Prostate gland (tissue), 2 donors: ENCODE measurements at regions of chr1 and their contacts with region 1.

Region 1: DNA sequence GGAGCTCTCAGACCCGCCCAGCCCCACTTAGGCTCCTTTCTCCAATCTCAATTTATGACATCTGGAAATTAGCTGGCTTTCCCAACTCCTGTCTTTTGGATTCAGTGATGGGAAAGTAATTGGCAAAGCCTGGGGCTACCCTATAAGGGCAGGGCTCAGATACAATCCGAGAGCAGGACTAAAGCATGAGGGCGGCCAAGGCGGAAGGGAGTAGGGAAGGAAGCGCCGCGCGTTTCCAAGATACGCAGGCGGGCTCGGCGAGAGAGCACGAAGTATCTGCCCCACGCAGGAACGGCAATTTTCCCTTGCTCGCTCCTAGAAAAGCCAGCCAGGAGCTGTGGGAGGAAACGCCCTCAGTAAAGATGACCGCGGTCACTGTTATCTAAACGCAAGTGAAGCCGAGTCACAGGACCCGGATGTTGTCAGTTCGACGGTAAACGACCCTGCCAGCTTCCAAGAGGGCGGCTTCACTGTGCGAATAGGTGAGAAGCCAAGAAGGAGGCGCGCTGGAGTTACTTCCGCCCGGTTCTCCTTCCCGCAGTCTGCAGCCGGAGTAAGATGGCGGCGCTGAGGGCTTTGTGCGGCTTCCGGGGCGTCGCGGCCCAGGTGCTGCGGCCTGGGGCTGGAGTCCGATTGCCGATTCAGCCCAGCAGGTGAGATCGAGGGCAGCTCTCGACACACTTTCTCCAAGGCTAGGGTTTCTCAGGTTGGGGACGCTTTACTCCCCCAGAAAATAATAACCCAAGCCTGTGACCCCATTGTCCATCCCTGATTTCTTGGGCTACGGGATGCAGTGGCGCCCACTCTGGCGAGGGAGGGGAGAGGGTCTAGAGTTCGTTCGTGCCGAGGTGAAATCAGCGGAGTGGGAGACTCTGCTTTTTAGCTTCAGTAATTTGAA is at the start of gene NDUFS2:
- DNase-seq: peak; percentile 99
- H3K4me3 ChIP-seq: peak within 1 kb of the TSS; percentile 62 to 69
- H3K27ac ChIP-seq: peak within 1 kb of the TSS; percentile 96 to 97
- H3K4me1 ChIP-seq: no peaks in the 10 kb centered on the region
- H3K27me3 ChIP-seq: no peaks in the 10 kb centered on the region
- CTCF ChIP-seq: peak in 1 of 4 experiments; percentile 6
- POLR2A ChIP-seq: peak; percentile 75
- total RNA-seq, gene NDUFS2: 108 to 111 TPM

Region 2: GRCh38 chr1:161021961-161022336 is 180.1 kb before region 1 on chr1:
- intact Hi-C with region 1: no loop called
- DNase-seq: no peak
- H3K4me3 ChIP-seq: peak overlapping the region; percentile 62 to 68
- H3K27ac ChIP-seq: peak overlapping the region; percentile 60 to 84
- H3K4me1 ChIP-seq: no peaks in the 10 kb centered on the region
- H3K27me3 ChIP-seq: no peaks in the 10 kb centered on the region
- CTCF ChIP-seq: no peak
- POLR2A ChIP-seq: no peak

Region 3: GRCh38 chr1:161111527-161111926 is 90.5 kb before region 1 on chr1:
- intact Hi-C with region 1: no loop called
- DNase-seq: no peak
- H3K4me3 ChIP-seq: no peak overlapping the region
- H3K27ac ChIP-seq: no peak overlapping the region
- H3K4me1 ChIP-seq: no peaks in the 10 kb centered on the region
- H3K27me3 ChIP-seq: no peaks in the 10 kb centered on the region
- CTCF ChIP-seq: no peak
- POLR2A ChIP-seq: no peak

Region 4: GRCh38 chr1:161225534-161226319 is 23.6 kb after region 1 on chr1 and contains the start of gene TOMM40L:
- intact Hi-C with region 1: no loop called
- DNase-seq: peak; percentile 85
- H3K4me3 ChIP-seq: peak within 1 kb of the TSS; percentile 57 to 58
- H3K27ac ChIP-seq: peak within 1 kb of the TSS; percentile 58 to 67
- H3K4me1 ChIP-seq: peaks cover 4% of the 10 kb centered on the region
- H3K27me3 ChIP-seq: no peaks in the 10 kb centered on the region
- CTCF ChIP-seq: peak in 3 of 4 experiments; percentile 31 to 49 (median 47)
- POLR2A ChIP-seq: peak; percentile 14
- total RNA-seq, gene TOMM40L: 7.5 to 15.6 TPM

Region 5: DNA sequence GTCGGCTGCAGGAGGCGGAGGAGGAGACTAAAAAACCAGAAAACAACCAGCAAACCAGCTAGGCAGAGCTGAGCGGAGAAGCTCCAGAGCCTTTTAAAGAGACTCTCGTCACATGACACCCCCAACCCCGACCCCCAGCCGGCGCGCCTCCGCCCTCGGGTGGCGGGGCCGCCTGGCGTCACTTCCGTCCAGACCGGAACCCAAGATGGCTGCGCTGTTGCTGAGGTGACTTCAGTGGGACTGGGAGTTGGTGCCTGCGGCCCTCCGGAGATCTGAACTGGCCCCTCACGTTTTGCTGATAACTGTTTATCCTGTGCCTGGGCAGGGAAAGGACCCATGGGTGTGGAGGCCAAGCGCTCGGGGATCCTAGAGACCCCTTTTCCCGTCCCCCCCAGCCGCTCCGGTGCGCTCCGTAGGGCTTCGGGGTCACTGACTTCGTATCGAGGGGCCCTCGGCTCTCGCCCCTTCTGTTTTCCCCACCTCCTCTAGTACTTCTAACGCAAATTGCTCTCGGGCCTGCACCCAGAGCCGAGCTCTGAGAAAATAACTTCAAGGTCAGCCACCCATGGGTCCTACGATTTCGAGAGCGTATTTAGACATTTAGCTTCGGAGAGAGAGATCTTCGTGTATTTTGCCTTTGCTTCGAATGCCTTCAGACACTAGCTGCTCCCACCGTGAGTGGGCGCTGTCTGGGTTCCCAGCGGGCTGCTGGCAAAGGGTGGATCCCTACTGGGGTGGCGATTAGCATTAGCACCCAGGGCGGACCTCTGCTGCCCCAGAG is 112.3 kb after region 1 on chr1 and contains the start of gene SDHC:
- intact Hi-C with region 1: loop called (anchors 5 kb)
- DNase-seq: peak; percentile 85
- H3K4me3 ChIP-seq: peak within 1 kb of the TSS; percentile 66 to 74
- H3K27ac ChIP-seq: peak within 1 kb of the TSS; percentile 86 to 88
- H3K4me1 ChIP-seq: no peaks in the 10 kb centered on the region
- H3K27me3 ChIP-seq: no peaks in the 10 kb centered on the region
- CTCF ChIP-seq: peak in 2 of 4 experiments; percentile 18 to 19
- POLR2A ChIP-seq: peak; percentile 64
- total RNA-seq, gene SDHC: 59.0 to 107 TPM

Region 6: DNA sequence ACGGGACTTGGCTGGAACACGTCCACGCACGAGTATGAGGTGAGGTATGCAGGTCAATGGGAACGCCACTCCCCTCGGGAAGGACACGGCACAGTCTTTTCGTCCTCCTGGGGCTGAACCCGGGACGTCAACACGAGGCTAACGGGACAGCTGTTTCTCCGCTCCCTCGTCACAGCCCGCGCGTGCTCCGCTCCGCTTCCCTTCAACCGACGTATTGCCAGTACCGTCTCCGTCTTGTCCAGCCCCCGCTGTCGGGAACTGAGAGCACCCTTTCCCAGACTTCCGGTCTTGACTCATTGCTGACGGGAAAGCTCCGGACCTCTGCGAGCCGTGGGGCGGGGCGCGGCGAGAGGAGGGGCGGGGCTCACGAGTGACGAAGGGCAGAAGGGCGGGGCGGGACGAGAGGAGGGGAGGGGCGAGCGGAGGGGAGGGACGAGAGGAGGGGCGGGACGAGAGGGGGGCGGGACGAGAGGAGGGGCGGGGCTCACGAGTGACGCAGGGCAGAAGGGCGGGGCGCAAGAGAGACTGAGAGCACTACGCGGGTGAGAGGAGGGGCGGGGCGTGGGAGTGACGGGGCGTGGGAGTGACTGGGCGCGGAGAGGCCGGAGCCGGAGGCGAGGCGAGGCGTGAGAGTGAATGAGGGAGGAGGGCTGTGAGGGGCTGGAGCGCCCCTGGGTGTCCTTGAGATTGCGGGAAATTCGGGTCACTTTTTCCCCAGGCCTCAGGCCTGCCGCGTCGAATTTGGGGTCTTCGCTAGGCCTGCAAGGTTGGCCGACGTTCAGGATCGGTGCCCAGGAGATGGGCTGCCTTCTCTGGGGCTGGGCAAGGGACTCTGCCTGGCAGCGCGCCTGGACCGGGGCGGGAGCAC is 187.8 kb after region 1 on chr1:
- intact Hi-C with region 1: loop called (anchors 5 kb)
- DNase-seq: peak; percentile 97
- H3K4me3 ChIP-seq: peak overlapping the region; percentile 51 to 61
- H3K27ac ChIP-seq: peak overlapping the region; percentile 88
- H3K4me1 ChIP-seq: no peaks in the 10 kb centered on the region
- H3K27me3 ChIP-seq: no peaks in the 10 kb centered on the region
- CTCF ChIP-seq: no peak
- POLR2A ChIP-seq: peak; percentile 94